IMR-90 (cell line): ENCODE measurements at regions of chr15 and their contacts with region 1.

Region 1: GRCh38 chr15:35751413-35752133 is 205.6 kb upstream of the DPH6 start:
- DNase-seq: peak; percentile 78
- ATAC-seq: peak; percentile 91
- H3K4me3 ChIP-seq: no peak overlapping the region
- H3K27ac ChIP-seq: no peak overlapping the region
- H3K4me1 ChIP-seq: peaks cover 2% of the 10 kb centered on the region; the same call in 1 of the 2 replicates
- H3K27me3 ChIP-seq: no peaks in the 10 kb centered on the region
- CTCF ChIP-seq: peak; percentile 71
- POLR2A ChIP-seq: no peak
- RAD21 ChIP-seq: peak; percentile 79

Region 2: GRCh38 chr15:35078221-35078915 is 673.2 kb before region 1 on chr15:
- CTCF ChIA-PET with region 1: no interaction called
- POLR2A ChIA-PET with region 1: no interaction called
- dilution Hi-C with region 1: no loop called
- in situ Hi-C with region 1: no loop called
- intact Hi-C with region 1: loop called (anchors 10 kb)
- DNase-seq: peak; percentile 72
- ATAC-seq: peak; percentile 80
- H3K4me3 ChIP-seq: no peak overlapping the region
- H3K27ac ChIP-seq: no peak overlapping the region
- H3K4me1 ChIP-seq: peaks cover 5% of the 10 kb centered on the region; the same call in 1 of the 2 replicates
- H3K27me3 ChIP-seq: no peaks in the 10 kb centered on the region
- CTCF ChIP-seq: peak; percentile 95
- POLR2A ChIP-seq: 0 out of 2 replicates have a peak, but pooled peaks have one; percentile 47
- RAD21 ChIP-seq: peak; percentile 97

Region 3: DNA sequence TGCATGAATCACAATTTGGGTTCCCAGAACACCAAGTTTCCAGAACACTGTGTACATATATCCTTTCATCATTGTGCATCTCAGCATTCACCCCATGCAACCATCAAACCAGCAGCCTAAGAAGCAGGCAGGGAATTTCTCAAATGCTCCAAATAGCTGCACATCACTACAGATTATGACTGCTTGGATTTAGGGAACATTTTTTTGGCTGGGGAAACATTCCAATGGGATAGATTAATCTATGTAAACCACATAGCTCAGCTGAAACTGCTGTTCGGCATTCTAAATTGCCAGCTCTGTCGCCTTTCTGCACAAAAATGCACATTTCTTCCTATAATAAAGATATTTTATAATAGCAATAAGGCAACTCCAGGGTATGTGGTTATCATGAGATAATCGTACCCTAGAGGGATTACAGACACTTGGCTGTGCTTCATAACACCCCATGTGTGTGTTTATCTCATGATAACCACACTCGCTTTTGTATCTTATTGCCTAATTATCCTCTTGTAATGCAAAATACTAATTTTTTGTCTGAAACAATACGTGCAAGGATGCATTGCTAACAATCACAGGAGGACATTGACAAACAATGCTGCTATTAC is 278.1 kb after region 1 on chr15:
- CTCF ChIA-PET with region 1: no interaction called
- POLR2A ChIA-PET with region 1: no interaction called
- dilution Hi-C with region 1: no loop called
- in situ Hi-C with region 1: no loop called
- intact Hi-C with region 1: loop called (anchors 10 kb)
- DNase-seq: peak; percentile 71
- ATAC-seq: peak; percentile 94
- H3K4me3 ChIP-seq: no peak overlapping the region
- H3K27ac ChIP-seq: peak overlapping the region; percentile 13; the same call in 1 of the 2 replicates
- H3K4me1 ChIP-seq: peaks cover 4% of the 10 kb centered on the region
- H3K27me3 ChIP-seq: no peaks in the 10 kb centered on the region
- CTCF ChIP-seq: no peak
- POLR2A ChIP-seq: no peak
- RAD21 ChIP-seq: no peak

Region 4: GRCh38 chr15:36323615-36324014 is 572.0 kb after region 1 on chr15:
- CTCF ChIA-PET with region 1: no interaction called
- POLR2A ChIA-PET with region 1: no interaction called
- dilution Hi-C with region 1: no loop called
- in situ Hi-C with region 1: no loop called
- intact Hi-C with region 1: no loop called
- DNase-seq: no peak
- ATAC-seq: no peak
- H3K4me3 ChIP-seq: no peak overlapping the region
- H3K27ac ChIP-seq: no peak overlapping the region
- H3K4me1 ChIP-seq: no peaks in the 10 kb centered on the region
- H3K27me3 ChIP-seq: no peaks in the 10 kb centered on the region
- CTCF ChIP-seq: no peak
- POLR2A ChIP-seq: no peak
- RAD21 ChIP-seq: no peak

Region 5: DNA sequence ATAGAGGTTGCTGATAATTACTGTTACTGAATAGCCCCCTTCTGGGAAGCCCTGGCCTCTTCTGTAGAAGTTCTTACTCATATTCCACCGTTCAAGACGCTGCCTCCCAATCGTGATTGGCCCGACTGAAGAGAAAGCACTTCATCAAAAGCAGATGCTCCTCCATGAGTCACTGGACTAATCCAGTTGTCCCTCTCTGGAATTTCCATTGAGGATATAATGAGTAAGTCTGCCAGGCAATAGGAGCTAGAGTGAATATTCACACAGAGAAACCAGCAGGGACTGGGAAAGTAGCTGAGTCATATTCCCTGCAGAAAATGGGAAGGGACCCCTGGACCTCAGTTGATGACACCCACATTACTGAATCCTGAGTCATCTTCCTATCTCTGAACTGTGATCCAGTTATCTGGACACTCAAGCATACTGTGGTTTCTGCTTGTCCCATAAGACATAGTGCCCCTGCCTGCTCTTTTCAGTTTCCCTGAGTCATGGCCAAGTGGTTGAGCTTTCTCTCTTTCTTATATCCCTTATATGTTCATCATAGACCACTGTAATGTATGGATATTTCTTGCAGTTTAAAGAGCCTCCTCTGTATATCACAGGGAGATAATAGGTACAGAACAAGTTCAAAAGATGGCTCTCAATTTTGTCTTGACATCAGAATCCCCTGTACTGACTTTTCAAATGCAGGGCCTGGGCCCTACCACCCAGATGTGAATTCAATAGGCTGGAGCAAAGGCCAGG is 676.7 kb after region 1 on chr15:
- CTCF ChIA-PET with region 1: interaction called, 4 read pairs
- POLR2A ChIA-PET with region 1: no interaction called
- dilution Hi-C with region 1: no loop called
- in situ Hi-C with region 1: no loop called
- intact Hi-C with region 1: loop called (anchors 5 kb)
- DNase-seq: peak; percentile 100
- ATAC-seq: peak; percentile 92
- H3K4me3 ChIP-seq: no peak overlapping the region
- H3K27ac ChIP-seq: peak overlapping the region; percentile 92
- H3K4me1 ChIP-seq: peaks cover 15% of the 10 kb centered on the region; the same call in 1 of the 2 replicates
- H3K27me3 ChIP-seq: no peaks in the 10 kb centered on the region
- CTCF ChIP-seq: no peak
- POLR2A ChIP-seq: no peak
- RAD21 ChIP-seq: peak; percentile 38; the same call in 1 of the 2 replicates

Region 6: GRCh38 chr15:36601497-36601932 is 849.9 kb after region 1 on chr15:
- CTCF ChIA-PET with region 1: no interaction called
- POLR2A ChIA-PET with region 1: no interaction called
- dilution Hi-C with region 1: no loop called
- in situ Hi-C with region 1: no loop called
- intact Hi-C with region 1: loop called (anchors 5 kb)
- DNase-seq: peak; percentile 89
- ATAC-seq: peak; percentile 90
- H3K4me3 ChIP-seq: no peak overlapping the region
- H3K27ac ChIP-seq: no peak overlapping the region
- H3K4me1 ChIP-seq: peaks cover 4% of the 10 kb centered on the region; the same call in 1 of the 2 replicates
- H3K27me3 ChIP-seq: no peaks in the 10 kb centered on the region
- CTCF ChIP-seq: no peak
- POLR2A ChIP-seq: no peak
- RAD21 ChIP-seq: no peak

Region 7: GRCh38 chr15:37100109-37100965 is 1348.8 kb after region 1 on chr15 and contains the start of gene MEIS2:
- CTCF ChIA-PET with region 1: no interaction called
- POLR2A ChIA-PET with region 1: no interaction called
- dilution Hi-C with region 1: no loop called
- in situ Hi-C with region 1: no loop called
- intact Hi-C with region 1: loop called (anchors 10 kb)
- DNase-seq: peak; percentile 96
- ATAC-seq: peak; percentile 52
- H3K4me3 ChIP-seq: peak within 1 kb of the TSS; percentile 94
- H3K27ac ChIP-seq: peak within 1 kb of the TSS; percentile 99
- H3K4me1 ChIP-seq: peaks cover 3% of the 10 kb centered on the region
- H3K27me3 ChIP-seq: no peaks in the 10 kb centered on the region
- CTCF ChIP-seq: no peak
- POLR2A ChIP-seq: peak; percentile 77
- RAD21 ChIP-seq: no peak
- total RNA-seq, gene MEIS2: 50.3 and 71.3 TPM in 2 replicates